ENCODE measurements at regions of chr12 and their contacts with region 1.

Region 1: GRCh38 chr12:9707864-9708808 is 24.8 kb downstream of the CLECL1 start:
- DNase-seq: peak; percentile 86
- H3K4me3 Mint-ChIP-seq: peak overlapping the region; percentile 70
- H3K27ac Mint-ChIP-seq: peak overlapping the region; percentile 92
- H3K4me1 Mint-ChIP-seq: peaks cover 50% of the 10 kb centered on the region
- H3K27me3 Mint-ChIP-seq: no peaks in the 10 kb centered on the region

Region 2: GRCh38 chr12:9331218-9331626 is 376.9 kb before region 1 on chr12:
- CTCF ChIA-PET with region 1: no interaction called
- intact Hi-C with region 1: loop called (anchors 2 kb)
- DNase-seq: peak; percentile 78
- H3K4me3 Mint-ChIP-seq: no peak overlapping the region
- H3K27ac Mint-ChIP-seq: no peak overlapping the region
- H3K4me1 Mint-ChIP-seq: peaks cover 15% of the 10 kb centered on the region
- H3K27me3 Mint-ChIP-seq: no peaks in the 10 kb centered on the region

Region 3: DNA sequence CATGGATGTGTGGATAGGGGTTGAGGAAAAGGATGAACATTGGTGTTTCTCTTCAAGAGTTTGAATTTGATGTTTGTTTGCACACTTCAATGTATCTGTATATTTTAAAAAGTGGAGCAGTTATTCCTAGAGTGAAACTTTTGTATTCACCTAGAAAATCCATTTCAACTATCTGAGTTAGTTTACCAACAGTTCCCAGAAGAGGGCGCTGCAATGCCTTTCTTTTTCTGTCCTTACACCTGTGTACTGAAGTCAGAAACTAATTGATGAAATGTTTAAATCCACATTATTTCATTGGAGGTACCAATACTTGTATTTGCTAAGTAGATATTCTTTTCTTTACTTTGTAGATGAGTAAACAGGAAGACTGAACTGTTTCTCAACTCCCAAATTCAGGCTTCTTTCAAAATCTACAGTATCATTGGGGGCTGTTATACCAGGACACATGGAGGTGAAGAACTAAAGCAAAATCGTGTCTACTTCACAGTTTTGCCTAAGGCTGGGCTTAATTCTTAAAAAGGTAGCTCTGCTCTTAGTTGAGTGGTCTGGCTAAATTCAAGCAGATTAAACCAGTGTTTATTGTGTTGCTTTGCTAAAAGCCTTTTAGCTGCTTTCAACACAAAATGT is 73.8 kb before region 1 on chr12:
- CTCF ChIA-PET with region 1: interaction called, 47 read pairs
- intact Hi-C with region 1: loop called (anchors 1 kb)
- DNase-seq: peak; percentile 95
- H3K4me3 Mint-ChIP-seq: peak overlapping the region; percentile 55
- H3K27ac Mint-ChIP-seq: peak overlapping the region; percentile 90
- H3K4me1 Mint-ChIP-seq: peaks cover 56% of the 10 kb centered on the region
- H3K27me3 Mint-ChIP-seq: no peaks in the 10 kb centered on the region

Region 4: DNA sequence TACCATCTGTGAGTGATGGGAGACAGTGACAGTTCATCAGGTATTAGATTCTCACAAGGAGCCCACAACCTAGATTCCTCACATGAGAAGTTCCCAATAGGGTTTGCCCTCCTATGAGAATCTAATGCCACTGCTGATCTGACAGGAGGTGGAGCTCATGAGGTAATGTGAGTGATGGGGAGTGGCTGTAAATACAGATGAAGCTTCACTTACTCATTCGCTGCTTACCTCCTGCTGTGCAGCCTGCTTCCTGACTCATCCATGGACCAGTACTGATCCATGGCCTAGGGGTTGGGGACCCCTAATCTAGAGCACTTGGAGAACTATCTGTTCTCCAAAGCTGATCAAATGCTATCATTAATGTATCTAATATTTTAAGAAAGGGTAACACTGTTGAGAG is 20.9 kb before region 1 on chr12:
- CTCF ChIA-PET with region 1: interaction called, 18 read pairs
- intact Hi-C with region 1: no loop called
- DNase-seq: peak; percentile 53
- H3K4me3 Mint-ChIP-seq: no peak overlapping the region
- H3K27ac Mint-ChIP-seq: peak overlapping the region; percentile 72
- H3K4me1 Mint-ChIP-seq: peaks cover 75% of the 10 kb centered on the region
- H3K27me3 Mint-ChIP-seq: no peaks in the 10 kb centered on the region

Region 5: DNA sequence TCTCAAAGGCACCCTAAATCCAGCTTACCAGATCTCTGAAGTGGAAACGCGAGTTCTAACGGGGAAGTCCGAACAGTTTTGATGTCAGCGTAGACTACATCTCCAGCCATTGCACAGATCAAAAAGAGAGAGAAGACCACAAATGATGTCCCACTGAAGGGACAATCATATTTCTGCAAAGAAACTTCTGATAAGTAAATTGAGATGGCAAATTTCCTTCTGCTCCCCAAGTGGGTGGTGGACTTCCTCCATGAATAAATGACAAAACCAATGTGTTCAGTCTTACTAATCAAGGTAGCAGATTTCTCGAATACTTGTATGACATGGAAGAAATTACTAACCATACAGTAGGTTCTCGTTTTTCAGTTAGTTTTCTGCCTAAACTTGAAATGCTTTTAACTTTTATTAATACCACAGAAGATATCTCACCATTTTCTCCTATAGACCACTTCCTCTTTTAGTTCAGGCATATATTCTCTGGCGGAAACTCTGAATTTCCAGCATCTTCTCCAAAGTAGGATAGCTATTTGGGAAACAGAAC is 24.9 kb after region 1 on chr12 and contains the start of gene CLECL1:
- CTCF ChIA-PET with region 1: interaction called, 6 read pairs
- intact Hi-C with region 1: loop called (anchors 2 kb)
- DNase-seq: peak; percentile 44
- H3K4me3 Mint-ChIP-seq: peak within 1 kb of the TSS; percentile 63
- H3K27ac Mint-ChIP-seq: peak within 1 kb of the TSS; percentile 59
- H3K4me1 Mint-ChIP-seq: peaks cover 54% of the 10 kb centered on the region
- H3K27me3 Mint-ChIP-seq: no peaks in the 10 kb centered on the region
- total RNA-seq, gene CLECL1: 1.7 to 1.9 TPM